Sciatic nerve (tissue), 2 donors: ENCODE measurements at regions of chr6 and their contacts with region 1.

Region 1: GRCh38 chr6:89432875-89433251 is at the start of gene ANKRD6:
- DNase-seq: peak; percentile 87
- ATAC-seq: peak; percentile 93
- total RNA-seq, gene ANKRD6: 22.3 TPM

Region 2: GRCh38 chr6:89371849-89372505 is 60.9 kb before region 1 on chr6:
- intact Hi-C with region 1: loop called (anchors 10 kb)
- DNase-seq: peak; percentile 84
- ATAC-seq: peak; percentile 89

Region 3: GRCh38 chr6:89605861-89606260 is 173.0 kb after region 1 on chr6:
- intact Hi-C with region 1: loop called (anchors 5 kb)
- DNase-seq: no peak
- ATAC-seq: no peak

Region 4: GRCh38 chr6:90319044-90319443 is 886.2 kb after region 1 on chr6:
- intact Hi-C with region 1: loop called (anchors 10 kb)
- DNase-seq: no peak
- ATAC-seq: no peak